ENCODE measurements at regions of chr2 and their contacts with region 1.

Region 1: GRCh38 chr2:205700331-205701132 is 18.2 kb downstream of the NRP2 start:
- H3K4me3 Mint-ChIP-seq: peak overlapping the region; percentile 44
- H3K27ac Mint-ChIP-seq: peak overlapping the region; percentile 96
- H3K4me1 Mint-ChIP-seq: peaks cover 87% of the 10 kb centered on the region
- H3K27me3 Mint-ChIP-seq: peaks cover 3% of the 10 kb centered on the region

Region 2: GRCh38 chr2:205047273-205047863 is 653.2 kb before region 1 on chr2:
- intact Hi-C with region 1: no loop called
- H3K4me3 Mint-ChIP-seq: no peak overlapping the region
- H3K27ac Mint-ChIP-seq: no peak overlapping the region
- H3K4me1 Mint-ChIP-seq: no peaks in the 10 kb centered on the region
- H3K27me3 Mint-ChIP-seq: no peaks in the 10 kb centered on the region

Region 3: DNA sequence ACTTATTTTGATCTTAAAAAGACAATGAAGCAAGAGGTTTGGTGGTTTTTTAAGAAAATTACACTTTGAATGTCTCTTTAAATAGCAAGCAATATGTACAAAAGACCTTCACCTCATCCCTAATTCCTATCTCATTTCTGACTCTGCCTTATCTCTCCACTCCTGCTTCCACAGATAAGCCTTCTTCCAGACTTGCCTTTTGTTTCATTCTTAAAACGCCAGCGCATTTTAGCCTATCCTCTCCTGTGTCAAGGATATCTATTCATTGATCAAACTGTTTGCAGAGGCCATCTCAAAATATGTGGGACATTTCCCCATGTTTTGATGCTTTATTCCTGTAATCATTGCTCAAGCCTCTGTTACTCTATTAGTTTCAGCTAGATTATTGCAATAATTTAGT is 592.7 kb before region 1 on chr2:
- intact Hi-C with region 1: no loop called
- H3K4me3 Mint-ChIP-seq: no peak overlapping the region
- H3K27ac Mint-ChIP-seq: no peak overlapping the region
- H3K4me1 Mint-ChIP-seq: no peaks in the 10 kb centered on the region
- H3K27me3 Mint-ChIP-seq: no peaks in the 10 kb centered on the region

Region 4: GRCh38 chr2:205714058-205714776 is 13.7 kb after region 1 on chr2:
- intact Hi-C with region 1: loop called (anchors 2 kb)
- H3K4me3 Mint-ChIP-seq: peak overlapping the region; percentile 23
- H3K27ac Mint-ChIP-seq: peak overlapping the region; percentile 95
- H3K4me1 Mint-ChIP-seq: peaks cover 75% of the 10 kb centered on the region
- H3K27me3 Mint-ChIP-seq: peaks cover 15% of the 10 kb centered on the region

Region 5: GRCh38 chr2:205722283-205722918 is 21.9 kb after region 1 on chr2:
- intact Hi-C with region 1: loop called (anchors 2 kb)
- H3K4me3 Mint-ChIP-seq: no peak overlapping the region
- H3K27ac Mint-ChIP-seq: peak overlapping the region; percentile 84
- H3K4me1 Mint-ChIP-seq: peaks cover 54% of the 10 kb centered on the region
- H3K27me3 Mint-ChIP-seq: peaks cover 13% of the 10 kb centered on the region

Region 6: DNA sequence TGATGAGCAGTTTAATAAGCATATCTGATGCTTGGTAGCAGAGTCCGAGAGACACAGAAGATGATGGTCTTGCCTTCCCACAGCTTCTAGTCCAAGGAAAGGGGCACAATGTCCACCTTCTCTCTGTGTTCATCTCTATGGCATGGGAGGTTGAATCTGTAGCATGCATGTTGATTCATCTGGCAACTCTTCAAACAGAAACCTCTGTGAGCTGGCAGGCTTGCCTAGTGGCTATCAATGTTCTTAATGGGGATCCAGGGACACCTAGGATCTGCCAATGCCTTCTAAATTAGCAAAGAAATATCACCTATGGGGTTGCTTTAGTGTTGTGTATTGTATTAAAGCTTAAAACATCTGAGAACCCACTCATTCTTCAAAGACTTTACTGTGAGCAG is 214.6 kb after region 1 on chr2:
- intact Hi-C with region 1: no loop called
- H3K4me3 Mint-ChIP-seq: no peak overlapping the region
- H3K27ac Mint-ChIP-seq: no peak overlapping the region
- H3K4me1 Mint-ChIP-seq: no peaks in the 10 kb centered on the region
- H3K27me3 Mint-ChIP-seq: peaks cover 3% of the 10 kb centered on the region

Measured in dendritic cell treated with granulocyte-macrophage colony-stimulating factor and Interleukin-4, amounts not matched to agents 40 ng/mL and 50 ng/mL, for 4 days (primary cell).